CD8-positive, alpha-beta T cell (primary cell): ENCODE measurements at regions of chr6 and their contacts with region 1.

Region 1: DNA sequence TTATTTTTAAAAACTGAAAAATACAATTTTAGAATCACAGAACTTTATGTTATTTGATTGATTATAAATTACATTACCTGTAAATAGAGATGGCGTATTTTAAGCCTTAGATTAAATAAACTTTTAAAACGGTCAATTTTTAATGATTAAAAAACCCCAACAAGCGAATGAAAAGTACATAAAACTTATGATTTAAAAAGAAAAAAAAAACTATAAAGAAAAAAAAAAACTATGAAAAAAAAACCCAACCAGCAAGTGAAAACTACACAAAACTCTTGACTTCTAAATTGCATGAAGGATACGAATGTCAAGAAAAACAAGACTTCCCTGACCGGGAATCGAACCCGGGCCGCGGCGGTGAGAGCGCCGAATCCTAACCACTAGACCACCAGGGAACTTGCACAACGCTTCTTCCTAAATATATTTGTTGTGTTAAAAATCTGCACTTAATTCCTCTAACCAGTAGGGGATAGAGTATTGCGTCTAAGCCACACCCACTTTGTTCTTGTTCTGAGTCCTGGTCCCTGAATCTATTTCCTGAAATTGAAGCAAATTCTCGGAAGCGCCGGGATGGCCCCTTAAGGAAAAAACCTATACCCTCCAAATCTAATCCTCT is 10.7 kb upstream of the NCOA7 start:
- DNase-seq: peak; percentile 78 to 94 (median 85)
- ATAC-seq: peak; percentile 77
- H3K4me3 ChIP-seq: peak overlapping the region; percentile 68 to 73
- H3K4me3 Mint-ChIP-seq: no peak overlapping the region
- H3K27ac ChIP-seq: peak overlapping the region; percentile 84 to 90
- H3K27ac Mint-ChIP-seq: no peak overlapping the region
- H3K4me1 ChIP-seq: peaks cover 13% of the 10 kb centered on the region
- H3K4me1 Mint-ChIP-seq: peaks cover 11% of the 10 kb centered on the region
- H3K27me3 ChIP-seq: no peaks in the 10 kb centered on the region
- H3K27me3 Mint-ChIP-seq: no peaks in the 10 kb centered on the region
- CTCF ChIP-seq: peak; percentile 43

Region 2: GRCh38 chr6:125623085-125623484 is 156.9 kb before region 1 on chr6:
- CTCF ChIA-PET with region 1: no interaction called
- POLR2A ChIA-PET with region 1: no interaction called
- intact Hi-C with region 1: no loop called
- DNase-seq: no peak
- ATAC-seq: no peak
- H3K4me3 ChIP-seq: no peak overlapping the region
- H3K4me3 Mint-ChIP-seq: no peak overlapping the region
- H3K27ac ChIP-seq: no peak overlapping the region
- H3K27ac Mint-ChIP-seq: no peak overlapping the region
- H3K4me1 ChIP-seq: no peaks in the 10 kb centered on the region
- H3K4me1 Mint-ChIP-seq: no peaks in the 10 kb centered on the region
- H3K27me3 ChIP-seq: peaks cover 0 to 5% of the 10 kb centered on the region in 2 experiments
- H3K27me3 Mint-ChIP-seq: peaks cover 17% of the 10 kb centered on the region
- CTCF ChIP-seq: no peak

Region 3: GRCh38 chr6:125742466-125743120 is 37.4 kb before region 1 on chr6:
- CTCF ChIA-PET with region 1: interaction called, 4 read pairs
- POLR2A ChIA-PET with region 1: interaction called, 12 read pairs
- intact Hi-C with region 1: loop called in 1 of 2 experiments (anchors 5 kb)
- DNase-seq: no peak
- ATAC-seq: no peak
- H3K4me3 ChIP-seq: no peak overlapping the region
- H3K4me3 Mint-ChIP-seq: no peak overlapping the region
- H3K27ac ChIP-seq: no peak overlapping the region
- H3K27ac Mint-ChIP-seq: no peak overlapping the region
- H3K4me1 ChIP-seq: peaks cover 4% of the 10 kb centered on the region
- H3K4me1 Mint-ChIP-seq: peaks cover 15% of the 10 kb centered on the region
- H3K27me3 ChIP-seq: no peaks in the 10 kb centered on the region
- H3K27me3 Mint-ChIP-seq: peaks cover 46% of the 10 kb centered on the region
- CTCF ChIP-seq: no peak

Region 4: DNA sequence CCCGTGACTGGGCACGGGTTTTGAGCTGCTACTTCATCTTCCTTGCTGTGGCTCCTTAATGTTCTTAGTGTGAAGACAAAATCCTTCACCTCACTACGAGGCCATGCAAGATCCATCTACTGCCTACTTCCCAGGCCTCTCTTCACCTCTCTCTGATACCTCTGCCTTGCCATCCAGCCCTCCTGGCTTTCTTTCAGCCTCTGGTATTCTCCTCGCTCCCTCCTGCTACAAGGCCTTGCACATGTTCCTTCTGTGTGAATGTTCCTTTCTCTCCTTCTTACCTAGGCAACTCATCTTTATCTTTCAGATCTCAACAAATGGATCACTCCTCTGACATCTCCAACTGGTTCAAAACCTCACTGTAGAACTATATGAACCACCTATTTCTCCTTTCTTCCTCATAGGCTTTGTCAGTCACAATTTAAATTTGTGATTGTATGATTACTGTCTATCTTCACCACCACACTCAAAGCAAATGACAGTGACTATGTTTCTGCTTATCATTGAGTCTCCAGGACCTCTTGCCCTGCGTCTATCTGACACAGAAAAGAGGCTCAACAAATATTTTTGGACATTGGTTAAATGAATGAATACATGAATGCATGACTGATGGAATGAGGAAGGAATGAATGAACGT is 10.8 kb before region 1 on chr6:
- CTCF ChIA-PET with region 1: interaction called, 10 read pairs
- POLR2A ChIA-PET with region 1: no interaction called
- intact Hi-C with region 1: no loop called
- DNase-seq: no peak
- ATAC-seq: no peak
- H3K4me3 ChIP-seq: no peak overlapping the region
- H3K4me3 Mint-ChIP-seq: no peak overlapping the region
- H3K27ac ChIP-seq: no peak overlapping the region
- H3K27ac Mint-ChIP-seq: no peak overlapping the region
- H3K4me1 ChIP-seq: no peaks in the 10 kb centered on the region
- H3K4me1 Mint-ChIP-seq: peaks cover 2% of the 10 kb centered on the region
- H3K27me3 ChIP-seq: no peaks in the 10 kb centered on the region
- H3K27me3 Mint-ChIP-seq: peaks cover 16% of the 10 kb centered on the region
- CTCF ChIP-seq: no peak

Region 5: DNA sequence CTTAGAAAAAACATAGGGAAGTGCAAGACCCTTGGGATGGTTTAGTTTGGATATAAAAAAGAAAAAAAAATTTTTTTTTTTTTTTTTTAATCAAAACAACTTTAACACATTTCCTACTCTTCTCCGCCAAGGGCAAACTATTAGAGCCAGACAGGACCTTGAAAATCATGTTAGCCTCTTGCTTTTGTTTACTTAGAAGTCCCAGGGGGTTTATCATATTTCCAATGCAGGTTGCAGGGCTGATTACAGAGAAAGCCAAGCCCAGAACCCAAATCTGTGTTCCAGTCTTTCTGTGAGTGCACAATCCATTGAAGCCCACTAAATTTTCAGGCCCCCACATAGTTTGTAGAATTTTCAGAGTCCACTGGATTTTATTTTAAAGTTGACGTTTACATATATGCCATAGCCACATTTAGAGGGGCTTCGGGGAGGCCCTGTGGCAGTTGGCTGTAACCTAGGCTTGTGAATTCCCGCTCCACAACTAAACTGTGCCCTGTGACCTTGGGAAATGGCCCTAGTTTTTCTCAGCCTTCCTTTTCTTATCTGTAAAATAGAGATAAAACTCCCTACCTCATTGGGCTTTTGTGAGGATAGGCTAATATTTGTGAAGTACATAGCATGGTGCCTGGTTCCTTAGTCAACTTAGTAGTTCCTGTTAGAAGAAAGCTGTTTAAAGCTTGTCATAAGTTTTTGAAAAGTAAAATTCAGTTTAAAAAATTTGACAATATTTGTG is 66.4 kb after region 1 on chr6:
- CTCF ChIA-PET with region 1: no interaction called
- POLR2A ChIA-PET with region 1: no interaction called
- intact Hi-C with region 1: no loop called
- DNase-seq: no peak
- ATAC-seq: no peak
- H3K4me3 ChIP-seq: no peak overlapping the region
- H3K4me3 Mint-ChIP-seq: no peak overlapping the region
- H3K27ac ChIP-seq: no peak overlapping the region
- H3K27ac Mint-ChIP-seq: no peak overlapping the region
- H3K4me1 ChIP-seq: no peaks in the 10 kb centered on the region
- H3K4me1 Mint-ChIP-seq: peaks cover 6% of the 10 kb centered on the region
- H3K27me3 ChIP-seq: no peaks in the 10 kb centered on the region
- H3K27me3 Mint-ChIP-seq: no peaks in the 10 kb centered on the region
- CTCF ChIP-seq: no peak

Region 6: DNA sequence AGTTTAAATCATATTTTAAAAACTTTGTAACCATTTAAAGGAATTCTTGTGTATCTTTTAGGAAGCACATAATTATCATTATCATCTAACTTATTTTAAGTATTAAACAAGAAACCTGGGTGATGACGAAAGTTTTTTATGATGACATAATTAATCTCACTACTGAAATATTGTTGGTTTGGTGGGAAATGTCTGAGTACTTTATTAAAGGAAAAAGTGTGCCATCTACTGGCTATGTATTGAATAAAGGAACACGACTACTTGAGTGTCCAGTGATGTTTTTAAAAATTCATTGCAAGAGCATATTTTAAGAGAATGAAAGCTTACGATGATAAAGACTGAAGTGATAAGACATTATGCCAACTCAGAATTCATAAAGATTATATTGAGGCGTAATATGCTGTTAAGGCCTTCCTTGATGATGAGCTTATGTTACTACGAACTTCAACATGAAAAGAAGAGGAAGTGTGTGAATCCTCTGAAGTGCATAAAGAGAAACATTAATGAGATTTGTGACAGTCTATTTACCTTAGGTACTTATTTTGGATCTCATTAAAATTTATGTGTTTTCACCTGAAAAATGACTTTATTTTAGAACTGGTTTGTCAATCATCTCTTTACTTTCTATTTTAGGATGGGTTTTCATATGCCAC is 194.3 kb after region 1 on chr6:
- CTCF ChIA-PET with region 1: interaction called, 10 read pairs
- POLR2A ChIA-PET with region 1: no interaction called
- intact Hi-C with region 1: loop called in 1 of 2 experiments (anchors 5 kb)
- DNase-seq: peak in 2 of 9 experiments; percentile 54 to 65
- ATAC-seq: peak; percentile 63
- H3K4me3 ChIP-seq: no peak overlapping the region
- H3K4me3 Mint-ChIP-seq: no peak overlapping the region
- H3K27ac ChIP-seq: no peak overlapping the region
- H3K27ac Mint-ChIP-seq: no peak overlapping the region
- H3K4me1 ChIP-seq: no peaks in the 10 kb centered on the region
- H3K4me1 Mint-ChIP-seq: peaks cover 13% of the 10 kb centered on the region
- H3K27me3 ChIP-seq: no peaks in the 10 kb centered on the region
- H3K27me3 Mint-ChIP-seq: no peaks in the 10 kb centered on the region
- CTCF ChIP-seq: peak; percentile 69

Region 7: GRCh38 chr6:126339796-126340609 is 560.0 kb after region 1 on chr6 and contains the start of gene CENPW:
- CTCF ChIA-PET with region 1: no interaction called
- POLR2A ChIA-PET with region 1: no interaction called
- intact Hi-C with region 1: loop called in 1 of 2 experiments (anchors 10 kb)
- DNase-seq: peak; percentile 77 to 95 (median 90)
- ATAC-seq: peak; percentile 98
- H3K4me3 ChIP-seq: peak within 1 kb of the TSS; percentile 63 to 71
- H3K4me3 Mint-ChIP-seq: no peak within 1 kb of the TSS
- H3K27ac ChIP-seq: peak within 1 kb of the TSS in 1 of 2 experiments; percentile 28
- H3K27ac Mint-ChIP-seq: peak within 1 kb of the TSS; percentile 15
- H3K4me1 ChIP-seq: peaks cover 9% of the 10 kb centered on the region
- H3K4me1 Mint-ChIP-seq: peaks cover 11% of the 10 kb centered on the region
- H3K27me3 ChIP-seq: no peaks in the 10 kb centered on the region
- H3K27me3 Mint-ChIP-seq: no peaks in the 10 kb centered on the region
- CTCF ChIP-seq: no peak
- total RNA-seq, gene CENPW: 2.6 to 4.2 TPM